Dorsolateral prefrontal cortex (tissue), 120 donors: ENCODE measurements at regions of chr10 and their contacts with region 1.

Region 1: DNA sequence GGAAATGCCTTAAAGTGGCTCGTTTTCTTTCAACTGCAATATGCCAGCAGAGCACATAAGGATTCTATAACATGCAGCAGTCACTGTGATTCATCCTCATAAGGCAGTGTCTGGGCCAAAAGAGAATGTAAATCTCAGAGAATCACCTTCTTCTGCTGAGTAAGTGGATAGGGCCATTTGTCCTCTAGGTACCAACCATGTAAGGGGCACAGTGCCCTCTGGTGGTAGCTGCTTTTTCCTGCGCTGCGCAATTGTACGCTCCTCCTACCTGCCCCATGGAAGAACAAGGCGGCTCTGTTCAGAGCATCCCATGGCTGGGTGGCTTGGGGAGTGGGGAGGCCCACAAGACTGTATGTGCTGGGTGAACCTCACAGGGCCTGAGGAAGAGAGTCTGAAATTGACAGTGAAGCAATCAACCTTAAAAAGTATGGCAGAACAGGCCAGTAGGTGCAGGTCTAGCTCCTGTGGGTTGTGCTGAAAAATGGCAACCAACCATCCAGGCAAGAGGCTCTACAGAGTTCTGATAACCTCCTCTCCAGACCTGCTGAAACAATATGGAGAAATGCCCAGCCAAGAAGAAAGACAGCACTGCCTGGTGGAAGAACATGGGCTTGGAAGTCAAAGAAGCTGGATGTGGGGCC is 78.6 kb upstream of the C10orf90 start:
- DNase-seq: peak; percentile 14 to 94 (median 82)
- H3K4me3 ChIP-seq: no peak overlapping the region
- H3K27ac ChIP-seq: peak overlapping the region in 42 of 59 donors; percentile 4 to 83 (median 56)
- H3K27me3 ChIP-seq: no peaks in the 10 kb centered on the region
- CTCF ChIP-seq: peak; percentile 47 to 93 (median 78)

Region 2: GRCh38 chr10:126171553-126171952 is 577.6 kb before region 1 on chr10:
- intact Hi-C with region 1: no loop called
- DNase-seq: no peak
- H3K4me3 ChIP-seq: no peak overlapping the region
- H3K27ac ChIP-seq: no peak overlapping the region
- H3K27me3 ChIP-seq: no peaks in the 10 kb centered on the region
- CTCF ChIP-seq: no peak

Region 3: DNA sequence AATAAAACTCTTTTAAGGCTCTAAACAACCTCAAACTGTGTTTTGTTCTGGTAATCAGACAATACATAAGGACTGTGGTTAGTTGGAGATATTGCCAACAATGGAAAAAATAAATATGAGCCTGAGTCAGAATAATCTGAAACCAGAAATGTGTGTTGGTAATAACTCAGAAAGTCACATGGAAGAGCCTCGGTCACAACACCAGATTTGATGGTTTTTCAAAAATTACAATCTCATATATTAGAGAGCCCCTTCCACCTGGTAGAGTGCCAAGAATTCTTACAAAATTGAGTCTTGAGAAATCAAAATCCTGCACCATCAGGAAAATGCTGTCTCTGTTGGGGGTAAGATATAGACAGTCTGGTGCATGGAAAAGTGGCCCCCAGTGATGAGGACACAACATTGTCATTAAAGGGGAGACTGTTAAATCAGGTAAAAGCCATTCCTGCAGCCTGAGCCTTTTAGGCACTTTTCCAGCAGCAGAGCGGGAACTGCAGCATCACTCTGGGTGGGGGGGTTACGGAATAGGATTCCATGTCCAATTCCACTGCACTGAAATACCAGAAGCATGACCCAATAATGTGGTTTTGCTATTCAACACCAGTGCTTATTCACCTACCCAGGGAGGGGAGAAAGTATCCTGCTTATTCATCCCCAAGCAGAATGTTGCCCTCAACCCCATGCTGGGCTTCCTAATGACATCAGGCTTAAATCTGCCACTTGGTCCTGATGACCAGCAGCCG is 351.3 kb before region 1 on chr10:
- intact Hi-C with region 1: loop called in 1 of 2 experiments (anchors 10 kb)
- DNase-seq: no peak
- H3K4me3 ChIP-seq: no peak overlapping the region
- H3K27ac ChIP-seq: peak overlapping the region in 1 of 59 donors; percentile 41
- H3K27me3 ChIP-seq: no peaks in the 10 kb centered on the region
- CTCF ChIP-seq: no peak

Region 4: DNA sequence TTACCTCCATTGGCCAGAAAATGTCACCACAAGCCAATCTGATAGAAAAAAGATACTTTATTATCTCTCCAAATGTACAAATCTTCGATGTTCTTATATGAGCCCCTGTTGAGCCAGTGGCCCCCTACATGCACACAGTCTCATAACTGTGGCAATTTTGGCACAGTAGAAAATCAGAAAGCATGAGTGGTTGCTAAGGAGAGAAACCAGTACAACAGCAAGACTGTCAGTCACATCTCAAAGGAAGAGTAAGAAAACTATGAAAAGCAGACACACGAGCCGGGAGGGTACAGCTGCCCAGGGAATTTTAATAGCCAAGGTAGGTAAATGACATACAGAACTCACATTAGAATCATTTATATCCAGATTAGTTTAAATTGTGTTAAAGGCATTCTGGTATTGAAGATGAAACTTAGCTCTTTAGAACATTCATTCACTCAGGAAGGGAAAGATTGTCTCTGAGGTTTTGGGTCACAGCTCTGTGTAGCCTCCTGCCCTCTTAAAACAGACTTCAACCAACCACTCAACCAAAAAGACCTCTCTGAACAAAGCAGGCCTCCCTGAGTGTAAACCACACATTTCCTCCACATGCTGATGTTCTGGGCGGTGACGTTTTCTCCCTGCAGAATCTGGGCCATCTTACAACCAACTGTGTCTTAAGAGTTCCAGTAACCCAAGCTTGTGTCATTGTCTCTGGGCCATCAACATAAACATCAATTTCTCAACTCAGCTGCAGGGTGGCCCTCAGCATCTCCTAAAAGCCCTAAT is 280.1 kb before region 1 on chr10:
- intact Hi-C with region 1: loop called in 1 of 2 experiments (anchors 5 kb)
- DNase-seq: no peak
- H3K4me3 ChIP-seq: no peak overlapping the region
- H3K27ac ChIP-seq: peak overlapping the region in 10 of 59 donors; percentile 8 to 44 (median 24)
- H3K27me3 ChIP-seq: peaks cover 0 to 5% (median 0%) of the 10 kb centered on the region in 45 donors
- CTCF ChIP-seq: no peak

Region 5: GRCh38 chr10:126569513-126570244 is 179.5 kb before region 1 on chr10:
- intact Hi-C with region 1: loop called in 1 of 2 experiments (anchors 5 kb)
- DNase-seq: no peak
- H3K4me3 ChIP-seq: peak overlapping the region in 42 of 59 donors; percentile 1 to 46 (median 23)
- H3K27ac ChIP-seq: peak overlapping the region in 57 of 59 donors; percentile 8 to 90 (median 71)
- H3K27me3 ChIP-seq: no peaks in the 10 kb centered on the region
- CTCF ChIP-seq: no peak

Region 6: DNA sequence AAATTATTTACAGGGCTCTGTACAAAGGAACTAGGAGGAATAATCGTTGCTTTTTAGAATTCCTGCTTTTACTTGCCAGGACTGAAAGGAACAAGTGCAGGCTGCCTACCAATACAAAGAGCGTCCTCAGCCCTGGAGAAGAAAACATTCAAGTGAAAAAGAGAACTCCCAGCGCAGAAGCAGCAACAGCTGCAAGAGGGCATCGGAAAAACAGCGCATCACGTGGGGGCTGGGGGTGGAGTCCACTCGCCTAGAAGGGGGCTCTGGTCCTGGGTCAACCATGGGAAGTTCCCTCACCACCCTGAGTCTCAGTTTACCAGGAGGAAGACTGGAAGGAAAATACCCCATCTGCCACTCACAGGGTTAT is 78.3 kb before region 1 on chr10:
- intact Hi-C with region 1: loop called (anchors 5 to 10 kb)
- DNase-seq: peak; percentile 22 to 89 (median 85)
- H3K4me3 ChIP-seq: peak overlapping the region in 58 of 59 donors; percentile 28 to 86 (median 60)
- H3K27ac ChIP-seq: peak overlapping the region; percentile 74 to 99 (median 97)
- H3K27me3 ChIP-seq: peaks cover 0 to 4% (median 0%) of the 10 kb centered on the region in 45 donors
- CTCF ChIP-seq: peak in 5 of 56 donors; percentile 6 to 20 (median 14)